Naive thymus-derived CD4-positive, alpha-beta T cell (primary cell): ENCODE measurements at regions of chr2 and their contacts with region 1.

Region 1: DNA sequence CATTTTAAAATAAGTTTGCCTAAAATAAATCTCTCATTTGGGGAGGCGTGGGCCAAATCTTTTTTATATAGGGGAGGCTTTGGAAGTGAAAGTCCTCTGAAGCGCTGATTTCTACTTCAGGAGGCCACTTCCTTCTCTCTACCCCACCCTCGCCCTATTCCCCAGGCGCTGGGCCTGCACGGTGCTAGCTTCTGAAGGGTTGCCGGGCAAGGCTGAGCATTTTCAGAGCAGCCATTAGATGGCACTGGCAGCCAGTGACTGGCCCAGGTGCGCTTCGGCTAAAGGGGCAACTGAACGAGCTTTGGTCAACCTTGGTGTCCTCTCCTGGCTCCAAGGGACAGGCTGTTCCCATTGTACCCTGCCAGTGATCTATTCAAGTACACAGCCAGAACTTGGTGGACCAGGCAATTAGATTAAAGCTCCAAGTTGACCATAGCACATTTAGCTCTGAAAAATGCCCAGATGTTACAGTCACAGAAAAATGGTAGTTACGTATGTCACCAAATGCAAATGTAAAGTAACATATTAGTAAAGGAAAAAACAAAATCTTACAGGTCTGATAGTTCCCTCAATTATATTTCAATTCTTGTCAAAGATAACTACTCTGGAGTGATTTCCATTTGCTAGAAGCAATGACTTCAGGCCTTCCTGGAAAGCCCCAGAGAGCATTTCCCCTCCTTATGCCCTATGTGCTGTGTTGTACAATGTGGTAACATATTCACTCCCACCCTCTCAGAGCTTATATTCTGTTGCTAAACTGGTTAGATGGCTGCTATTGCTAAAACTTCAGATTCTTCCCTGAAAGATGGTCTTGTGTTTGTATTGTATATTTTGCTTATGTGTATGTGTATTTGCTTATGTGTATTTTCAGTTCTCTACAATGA is 2.1 kb downstream of the POMC start:
- DNase-seq: peak in 7 of 9 donors; percentile 12 to 46 (median 40)
- ATAC-seq: peak; percentile 69
- H3K4me3 ChIP-seq: no peak overlapping the region
- H3K4me3 Mint-ChIP-seq: peak overlapping the region in 7 of 10 donors; percentile 15 to 83 (median 68)
- H3K27ac ChIP-seq: no peak overlapping the region
- H3K27ac Mint-ChIP-seq: peak overlapping the region in 2 of 9 donors; percentile 2 to 69
- H3K4me1 ChIP-seq: no peaks in the 10 kb centered on the region
- H3K4me1 Mint-ChIP-seq: peaks cover 6 to 36% (median 26%) of the 10 kb centered on the region in 7 donors
- H3K27me3 ChIP-seq: no peaks in the 10 kb centered on the region
- H3K27me3 Mint-ChIP-seq: peaks cover 11 to 73% (median 35%) of the 10 kb centered on the region in 5 donors

Region 2: GRCh38 chr2:24749069-24749691 is 417.1 kb before region 1 on chr2:
- CTCF ChIA-PET with region 1: no interaction called
- POLR2A ChIA-PET with region 1: no interaction called
- intact Hi-C with region 1: no loop called
- DNase-seq: no peak
- ATAC-seq: no peak
- H3K4me3 ChIP-seq: no peak overlapping the region
- H3K4me3 Mint-ChIP-seq: no peak overlapping the region
- H3K27ac ChIP-seq: no peak overlapping the region
- H3K27ac Mint-ChIP-seq: peak overlapping the region in 2 of 9 donors; percentile 34 to 53
- H3K4me1 ChIP-seq: peaks cover 0 to 5% of the 10 kb centered on the region in 2 donors
- H3K4me1 Mint-ChIP-seq: peaks cover 0 to 12% (median 4%) of the 10 kb centered on the region in 7 donors
- H3K27me3 ChIP-seq: no peaks in the 10 kb centered on the region
- H3K27me3 Mint-ChIP-seq: no peaks in the 10 kb centered on the region

Region 3: GRCh38 chr2:25700221-25700660 is 534.0 kb after region 1 on chr2:
- CTCF ChIA-PET with region 1: interaction called, 3 read pairs
- POLR2A ChIA-PET with region 1: no interaction called
- intact Hi-C with region 1: loop called in 1 of 2 experiments (anchors 2 kb)
- DNase-seq: peak in 7 of 9 donors; percentile 12 to 41 (median 34)
- ATAC-seq: peak; percentile 53
- H3K4me3 ChIP-seq: no peak overlapping the region
- H3K4me3 Mint-ChIP-seq: no peak overlapping the region
- H3K27ac ChIP-seq: no peak overlapping the region
- H3K27ac Mint-ChIP-seq: peak overlapping the region in 2 of 9 donors; percentile 6 to 81
- H3K4me1 ChIP-seq: no peaks in the 10 kb centered on the region
- H3K4me1 Mint-ChIP-seq: peaks cover 0 to 4% (median 4%) of the 10 kb centered on the region in 7 donors
- H3K27me3 ChIP-seq: no peaks in the 10 kb centered on the region
- H3K27me3 Mint-ChIP-seq: peaks cover 0 to 2% (median 0%) of the 10 kb centered on the region in 5 donors